Activated CD4-positive, alpha-beta T cell treated with anti-CD3 and anti-CD28 coated beads for 36 hours (primary cell): ENCODE measurements at regions of chr1 and their contacts with region 1.

Region 1: GRCh38 chr1:17966341-17966740 is 141.3 kb upstream of the IGSF21 start:
- DNase-seq: no peak
- ATAC-seq: no peak
- H3K4me3 Mint-ChIP-seq: no peak overlapping the region
- H3K27ac Mint-ChIP-seq: no peak overlapping the region
- H3K4me1 Mint-ChIP-seq: no peaks in the 10 kb centered on the region
- H3K27me3 Mint-ChIP-seq: peaks cover 5% of the 10 kb centered on the region

Region 2: DNA sequence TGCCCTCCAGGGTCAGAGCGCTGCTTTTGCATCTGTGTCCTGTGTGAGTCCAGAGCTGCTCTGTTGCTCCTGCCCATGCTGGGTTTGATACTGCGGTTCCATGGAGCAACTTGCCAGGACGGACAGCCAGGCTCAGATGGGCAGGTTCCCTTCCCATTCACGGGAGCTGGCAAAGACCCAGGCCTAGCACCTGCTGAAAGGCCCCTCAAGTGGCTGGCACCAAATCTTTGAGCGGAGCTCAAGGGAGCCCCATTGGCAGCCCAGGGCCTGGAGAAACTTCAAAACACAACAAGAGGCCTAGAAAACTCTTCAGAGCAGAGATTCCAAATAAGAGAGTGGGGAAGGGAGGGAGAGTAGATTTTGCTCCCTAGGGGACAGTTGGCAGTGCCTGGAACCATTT is 114.0 kb before region 1 on chr1:
- CTCF ChIA-PET with region 1: no interaction called
- POLR2A ChIA-PET with region 1: no interaction called
- intact Hi-C with region 1: loop called in 1 of 2 experiments (anchors 5 kb)
- DNase-seq: no peak
- ATAC-seq: no peak
- H3K4me3 Mint-ChIP-seq: no peak overlapping the region
- H3K27ac Mint-ChIP-seq: no peak overlapping the region
- H3K4me1 Mint-ChIP-seq: no peaks in the 10 kb centered on the region
- H3K27me3 Mint-ChIP-seq: peaks cover 6% of the 10 kb centered on the region